Vagina (tissue), 2 donors: ENCODE measurements at regions of chr10 and their contacts with region 1.

Region 1: DNA sequence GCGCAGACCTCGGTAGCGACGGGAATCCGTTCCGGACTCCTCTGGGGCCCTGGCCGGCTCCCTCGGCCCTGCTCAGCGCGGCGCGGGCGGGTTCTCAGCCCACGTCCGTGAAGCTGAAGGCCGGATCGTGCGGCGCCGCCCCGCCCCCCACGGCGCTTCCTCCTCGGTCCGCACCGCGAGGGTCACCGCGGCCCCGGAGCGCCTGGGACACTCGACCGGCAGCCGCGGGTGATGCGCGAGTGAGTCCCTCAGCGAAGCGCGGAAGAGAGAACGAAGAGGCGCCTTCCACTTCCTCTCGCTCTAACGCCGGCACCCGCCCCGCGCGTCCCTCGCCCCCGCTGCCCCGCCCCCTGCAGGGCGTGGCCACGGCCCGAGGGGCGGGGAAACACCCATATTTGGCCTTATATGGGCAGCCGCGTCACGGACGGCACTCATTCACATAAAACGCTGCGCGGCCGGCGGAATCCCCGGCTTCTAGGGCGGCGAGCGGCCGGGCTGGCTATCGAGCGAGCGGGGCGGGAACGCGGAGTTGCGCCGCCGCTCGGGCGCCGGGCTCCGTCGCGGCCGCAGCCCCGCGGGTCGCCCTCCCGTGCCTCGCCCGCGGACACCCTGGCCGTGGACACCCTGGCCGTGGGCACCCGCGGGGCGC is at the start of gene DUSP5:
- DNase-seq: peak in 1 of 2 donors; percentile 94
- H3K4me3 ChIP-seq: peak within 1 kb of the TSS; percentile 75 to 79
- H3K27ac ChIP-seq: peak within 1 kb of the TSS; percentile 93
- H3K4me1 ChIP-seq: peaks cover 47% of the 10 kb centered on the region
- H3K27me3 ChIP-seq: no peaks in the 10 kb centered on the region
- CTCF ChIP-seq: no peak
- POLR2A ChIP-seq: peak; percentile 73 to 85
- total RNA-seq, gene DUSP5: 75.1 TPM

Region 2: DNA sequence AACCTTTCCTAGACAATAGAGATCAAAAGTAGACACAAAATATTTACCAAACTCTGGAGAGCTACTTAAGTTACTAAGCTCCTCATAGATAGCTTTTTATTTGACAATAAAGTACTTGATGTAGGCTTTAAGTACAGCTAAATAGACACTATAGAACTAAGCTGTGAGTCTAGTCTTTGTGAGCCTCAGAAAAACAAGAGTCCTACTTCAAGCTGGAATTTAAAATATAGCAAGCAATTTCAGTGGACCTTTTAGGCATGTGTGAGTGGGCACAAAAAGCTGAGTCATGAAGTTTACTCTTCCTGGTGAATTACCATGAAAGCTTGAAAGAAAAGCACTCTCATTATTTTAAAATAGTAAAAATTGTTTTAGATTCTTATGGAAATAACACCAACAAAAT is 413.7 kb before region 1 on chr10:
- intact Hi-C with region 1: no loop called
- DNase-seq: no peak
- H3K4me3 ChIP-seq: no peak overlapping the region
- H3K27ac ChIP-seq: no peak overlapping the region
- H3K4me1 ChIP-seq: peaks cover 72% of the 10 kb centered on the region
- H3K27me3 ChIP-seq: no peaks in the 10 kb centered on the region
- CTCF ChIP-seq: no peak
- POLR2A ChIP-seq: no peak

Region 3: DNA sequence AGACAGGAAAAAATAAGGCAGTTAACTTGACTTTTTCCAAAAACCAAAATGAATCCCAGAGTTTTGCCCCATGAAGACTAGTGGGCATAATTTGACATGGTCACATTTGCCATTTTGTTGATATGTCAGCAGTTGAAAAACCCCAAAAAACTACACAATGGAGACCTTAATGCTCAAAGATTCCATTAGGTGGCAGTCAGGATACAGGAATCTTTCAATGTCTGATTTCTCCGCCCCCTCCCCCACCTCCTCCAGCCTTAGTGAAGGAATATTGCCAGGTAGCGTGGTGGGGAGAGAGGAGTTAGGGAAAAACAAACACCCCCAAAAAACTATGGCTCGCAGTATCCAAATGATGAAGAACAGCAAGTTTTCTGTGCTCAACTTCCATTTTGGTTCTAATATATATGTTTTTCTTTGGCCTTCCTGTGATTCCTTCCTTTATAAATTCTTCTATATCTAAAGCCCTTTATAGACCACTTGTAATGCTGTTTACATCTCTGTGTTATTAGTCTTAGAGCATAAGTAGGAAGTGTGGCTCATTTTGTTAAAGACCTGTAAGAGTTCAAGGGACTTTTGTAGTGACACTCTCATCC is 186.1 kb before region 1 on chr10:
- intact Hi-C with region 1: loop called (anchors 10 kb)
- DNase-seq: no peak
- H3K4me3 ChIP-seq: no peak overlapping the region
- H3K27ac ChIP-seq: no peak overlapping the region
- H3K4me1 ChIP-seq: no peaks in the 10 kb centered on the region
- H3K27me3 ChIP-seq: no peaks in the 10 kb centered on the region
- CTCF ChIP-seq: peak; percentile 49 to 90 (median 75)
- POLR2A ChIP-seq: no peak

Region 4: GRCh38 chr10:110395725-110396651 is 101.6 kb before region 1 on chr10:
- intact Hi-C with region 1: no loop called
- DNase-seq: no peak
- H3K4me3 ChIP-seq: no peak overlapping the region
- H3K27ac ChIP-seq: peak overlapping the region; percentile 44
- H3K4me1 ChIP-seq: peaks cover 62% of the 10 kb centered on the region
- H3K27me3 ChIP-seq: no peaks in the 10 kb centered on the region
- CTCF ChIP-seq: no peak
- POLR2A ChIP-seq: no peak

Region 5: GRCh38 chr10:110535958-110536891 is 38.7 kb after region 1 on chr10:
- intact Hi-C with region 1: no loop called
- DNase-seq: peak in 1 of 2 donors; percentile 10
- H3K4me3 ChIP-seq: no peak overlapping the region
- H3K27ac ChIP-seq: no peak overlapping the region
- H3K4me1 ChIP-seq: no peaks in the 10 kb centered on the region
- H3K27me3 ChIP-seq: no peaks in the 10 kb centered on the region
- CTCF ChIP-seq: no peak
- POLR2A ChIP-seq: no peak

Region 6: GRCh38 chr10:111634191-111634590 is 1136.6 kb after region 1 on chr10:
- intact Hi-C with region 1: loop called (anchors 10 kb)
- DNase-seq: no peak
- H3K4me3 ChIP-seq: no peak overlapping the region
- H3K27ac ChIP-seq: no peak overlapping the region
- H3K4me1 ChIP-seq: no peaks in the 10 kb centered on the region
- H3K27me3 ChIP-seq: no peaks in the 10 kb centered on the region
- CTCF ChIP-seq: no peak
- POLR2A ChIP-seq: no peak